ENCODE measurements at regions of chr17 and their contacts with region 1.

Region 1: GRCh38 chr17:79087428-79088143 is 13.0 kb downstream of the ENGASE start:
- DNase-seq: peak; percentile 78
- ATAC-seq: peak; percentile 82
- H3K4me3 Mint-ChIP-seq: no peak overlapping the region
- H3K27ac Mint-ChIP-seq: no peak overlapping the region
- H3K4me1 Mint-ChIP-seq: peaks cover 2% of the 10 kb centered on the region
- H3K27me3 Mint-ChIP-seq: no peaks in the 10 kb centered on the region

Region 2: GRCh38 chr17:79045842-79046196 is 41.8 kb before region 1 on chr17:
- CTCF ChIA-PET with region 1: interaction called, 27 read pairs
- DNase-seq: peak; percentile 71
- ATAC-seq: peak; percentile 80
- H3K4me3 Mint-ChIP-seq: no peak overlapping the region
- H3K27ac Mint-ChIP-seq: no peak overlapping the region
- H3K4me1 Mint-ChIP-seq: no peaks in the 10 kb centered on the region
- H3K27me3 Mint-ChIP-seq: no peaks in the 10 kb centered on the region

Region 3: GRCh38 chr17:79074650-79075445 is 12.7 kb before region 1 on chr17 and contains the start of gene ENGASE:
- CTCF ChIA-PET with region 1: interaction called, 30 read pairs
- DNase-seq: peak; percentile 93
- ATAC-seq: peak; percentile 99
- H3K4me3 Mint-ChIP-seq: peak within 1 kb of the TSS; percentile 83
- H3K27ac Mint-ChIP-seq: peak within 1 kb of the TSS; percentile 77
- H3K4me1 Mint-ChIP-seq: peaks cover 10% of the 10 kb centered on the region
- H3K27me3 Mint-ChIP-seq: no peaks in the 10 kb centered on the region
- total RNA-seq, gene ENGASE: 42.9 to 45.7 TPM

Region 4: DNA sequence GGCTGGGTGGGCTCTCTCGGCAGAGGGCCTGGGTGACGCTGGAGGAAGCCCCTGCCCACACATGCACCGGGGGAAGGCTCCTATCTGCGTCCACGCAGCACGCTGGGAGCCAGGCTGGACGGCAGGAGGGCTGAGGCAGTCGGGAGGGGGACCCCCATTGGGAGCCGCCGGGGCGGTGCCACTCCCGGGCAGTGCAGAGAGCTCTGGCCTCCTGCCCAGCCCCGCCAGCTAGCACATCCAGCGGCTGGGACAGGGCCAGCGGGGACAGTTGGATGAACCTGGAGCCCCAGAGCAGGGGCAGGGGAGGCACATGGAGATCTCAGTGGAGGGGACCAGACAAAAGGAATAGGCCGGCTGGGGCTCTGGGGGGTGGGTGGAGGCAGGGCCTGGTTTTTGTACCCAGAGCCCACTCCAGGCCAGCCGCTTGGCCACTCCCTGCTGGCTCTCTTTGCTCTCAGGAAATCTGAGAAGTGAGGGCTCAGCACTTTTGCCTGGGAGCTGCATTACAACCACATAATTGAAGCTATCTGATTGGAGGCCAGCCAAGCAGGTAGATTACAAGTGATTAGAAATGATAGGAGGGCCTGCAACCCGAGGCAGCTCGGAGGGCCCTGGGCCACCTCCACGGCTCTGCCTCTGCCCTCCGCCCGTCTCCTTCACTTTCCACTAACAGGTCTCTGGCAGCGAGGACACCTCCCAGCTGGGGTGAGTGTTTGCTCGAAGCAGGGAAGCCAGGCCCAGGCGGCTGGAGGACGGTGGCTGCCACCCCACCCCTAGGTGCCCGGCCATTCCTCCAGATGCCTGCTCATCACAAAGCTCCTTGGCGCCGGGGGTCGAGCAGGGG is 27.1 kb after region 1 on chr17:
- CTCF ChIA-PET with region 1: no interaction called
- DNase-seq: no peak
- ATAC-seq: no peak
- H3K4me3 Mint-ChIP-seq: no peak overlapping the region
- H3K27ac Mint-ChIP-seq: no peak overlapping the region
- H3K4me1 Mint-ChIP-seq: no peaks in the 10 kb centered on the region
- H3K27me3 Mint-ChIP-seq: peaks cover 3% of the 10 kb centered on the region

Region 5: DNA sequence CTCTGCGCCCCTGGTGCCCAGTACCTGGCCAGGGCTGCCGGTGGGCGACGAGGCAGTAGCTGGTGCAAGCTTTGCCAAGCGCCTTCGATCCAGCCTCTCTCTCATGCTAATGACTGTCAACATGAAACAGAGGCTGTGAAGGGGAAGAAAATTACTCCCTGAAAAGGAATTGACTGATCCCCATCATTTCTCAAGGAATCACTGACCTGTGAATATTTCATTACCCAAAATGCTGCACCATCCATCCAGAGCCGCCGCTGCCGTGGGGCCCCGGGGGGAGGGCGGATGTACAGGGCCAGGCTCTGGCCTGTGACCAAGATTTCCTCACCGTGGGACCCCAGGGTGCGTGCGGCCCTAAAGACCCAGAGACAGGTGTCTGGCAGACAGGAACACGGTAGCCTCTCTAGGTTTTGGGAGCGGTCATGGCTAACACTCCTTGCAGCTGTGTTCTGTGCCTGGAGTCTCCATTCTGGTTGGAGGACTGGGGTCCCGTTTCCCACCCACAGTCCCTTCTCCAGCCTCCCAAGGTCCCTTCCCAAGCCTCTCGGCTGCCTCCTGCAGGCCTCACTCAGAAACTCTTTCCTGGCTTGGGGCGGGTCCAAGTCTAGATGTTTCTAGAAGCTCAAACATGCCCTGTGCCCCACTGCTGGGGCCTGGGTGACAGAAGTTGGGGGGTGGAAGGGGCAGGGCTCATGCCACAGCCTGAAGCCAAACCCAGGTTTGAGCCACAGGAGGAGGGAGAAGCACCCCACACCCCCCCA is 60.3 kb after region 1 on chr17:
- CTCF ChIA-PET with region 1: no interaction called
- DNase-seq: no peak
- ATAC-seq: no peak
- H3K4me3 Mint-ChIP-seq: no peak overlapping the region
- H3K27ac Mint-ChIP-seq: no peak overlapping the region
- H3K4me1 Mint-ChIP-seq: no peaks in the 10 kb centered on the region
- H3K27me3 Mint-ChIP-seq: no peaks in the 10 kb centered on the region

Region 6: DNA sequence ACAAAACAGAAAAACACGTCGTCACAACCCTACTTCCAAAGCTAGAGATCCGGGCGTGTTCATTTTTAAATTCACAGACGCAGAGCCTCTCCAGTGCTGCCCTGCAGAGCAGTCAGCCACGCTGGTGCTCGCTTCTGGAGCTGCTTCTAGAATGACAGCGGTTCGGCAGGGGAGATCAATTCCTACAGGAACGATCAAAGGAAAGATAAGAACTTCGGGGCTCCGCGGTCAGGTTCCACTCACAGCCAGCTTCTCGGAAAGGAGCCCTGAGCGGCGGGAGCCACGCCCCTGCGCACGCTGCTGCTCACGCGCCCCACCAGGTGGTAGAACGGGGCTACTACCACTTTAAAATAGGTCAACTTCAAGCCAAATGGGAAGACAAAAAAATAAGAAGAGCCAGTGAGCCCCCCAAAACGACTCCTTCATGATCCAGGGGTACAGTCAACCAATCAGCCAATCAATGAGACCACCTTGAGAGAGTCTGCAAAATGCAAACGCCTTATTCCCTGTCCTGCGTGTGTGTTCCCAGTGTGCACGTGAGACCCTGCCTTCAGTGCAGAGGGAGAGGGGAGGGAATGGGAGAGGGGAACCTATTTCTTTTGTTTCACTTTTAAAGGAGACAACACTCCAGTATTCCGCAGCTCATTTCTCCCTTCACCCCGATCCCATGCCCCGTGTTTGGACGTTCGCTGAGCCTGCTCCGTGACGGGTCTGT is 313.6 kb after region 1 on chr17:
- CTCF ChIA-PET with region 1: interaction called, 96 read pairs
- DNase-seq: peak; percentile 73
- ATAC-seq: peak; percentile 90
- H3K4me3 Mint-ChIP-seq: peak overlapping the region; percentile 31
- H3K27ac Mint-ChIP-seq: no peak overlapping the region
- H3K4me1 Mint-ChIP-seq: peaks cover 11% of the 10 kb centered on the region
- H3K27me3 Mint-ChIP-seq: peaks cover 38% of the 10 kb centered on the region